ENCODE measurements at regions of chr4 and their contacts with region 1.

Region 1: GRCh38 chr4:25159884-25160713 is at the start of gene SEPSECS:
- DNase-seq: peak; percentile 94
- H3K4me3 Mint-ChIP-seq: peak within 1 kb of the TSS; percentile 92
- H3K27ac Mint-ChIP-seq: peak within 1 kb of the TSS; percentile 90
- H3K4me1 Mint-ChIP-seq: peaks cover 32% of the 10 kb centered on the region
- H3K27me3 Mint-ChIP-seq: no peaks in the 10 kb centered on the region
- total RNA-seq, gene SEPSECS: 13.4 TPM in 2 replicates

Region 2: GRCh38 chr4:25123236-25123635 is 36.9 kb before region 1 on chr4:
- intact Hi-C with region 1: loop called (anchors 1 kb)
- DNase-seq: no peak
- H3K4me3 Mint-ChIP-seq: no peak overlapping the region
- H3K27ac Mint-ChIP-seq: peak overlapping the region; percentile 58
- H3K4me1 Mint-ChIP-seq: peaks cover 27% of the 10 kb centered on the region
- H3K27me3 Mint-ChIP-seq: no peaks in the 10 kb centered on the region

Region 3: GRCh38 chr4:25180524-25181131 is 20.5 kb after region 1 on chr4:
- intact Hi-C with region 1: loop called (anchors 2 kb)
- DNase-seq: no peak
- H3K4me3 Mint-ChIP-seq: no peak overlapping the region
- H3K27ac Mint-ChIP-seq: no peak overlapping the region
- H3K4me1 Mint-ChIP-seq: peaks cover 12% of the 10 kb centered on the region
- H3K27me3 Mint-ChIP-seq: no peaks in the 10 kb centered on the region

Region 4: DNA sequence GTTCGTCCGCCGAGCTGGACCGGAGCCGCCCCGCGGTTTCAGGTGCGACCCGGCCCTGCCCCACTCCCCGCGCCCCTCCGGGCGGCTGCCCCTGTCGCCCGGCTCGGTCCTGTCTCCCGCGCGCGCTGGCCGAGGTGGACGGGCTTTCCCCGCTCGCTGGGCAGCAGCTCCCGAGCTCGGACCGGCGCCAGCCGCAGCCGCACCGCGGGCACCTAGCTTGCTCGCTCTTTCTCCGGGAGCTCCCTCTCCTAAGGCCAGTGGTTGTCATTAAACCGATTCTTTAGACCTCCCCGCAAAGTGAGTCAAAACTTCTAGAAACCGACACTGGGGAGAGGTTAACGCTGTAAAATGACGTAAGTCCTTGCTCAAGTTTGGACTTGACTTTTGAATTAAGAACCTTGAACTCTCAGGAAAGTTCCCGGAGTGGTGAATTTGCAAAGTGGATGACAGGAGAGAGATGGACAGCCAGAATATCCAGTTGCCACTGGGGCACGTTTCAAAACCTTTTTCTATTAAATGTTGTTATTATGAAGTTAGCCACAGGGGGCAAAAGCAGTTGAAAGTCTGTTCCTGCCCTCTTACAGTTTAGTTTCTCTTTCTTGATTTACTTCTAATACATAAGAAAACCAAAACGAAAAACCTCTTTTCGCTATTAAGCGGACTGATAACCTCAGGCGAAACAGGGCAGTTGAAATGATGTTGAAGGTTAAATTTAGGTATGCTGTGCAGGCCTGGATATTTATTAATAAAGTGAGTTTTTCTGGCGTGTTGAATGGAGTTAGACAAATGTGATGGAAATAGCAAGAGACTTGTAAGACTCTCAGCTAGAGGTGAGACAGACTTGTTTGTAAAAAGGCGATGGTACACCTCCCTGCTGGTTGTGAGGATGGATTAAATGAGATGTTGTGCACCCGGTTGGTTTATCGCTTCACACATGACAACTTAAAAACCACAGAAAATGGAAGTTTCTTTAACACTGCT is 74.6 kb after region 1 on chr4:
- intact Hi-C with region 1: loop called (anchors 1 kb)
- DNase-seq: peak; percentile 40
- H3K4me3 Mint-ChIP-seq: peak overlapping the region; percentile 95
- H3K27ac Mint-ChIP-seq: peak overlapping the region; percentile 98
- H3K4me1 Mint-ChIP-seq: peaks cover 35% of the 10 kb centered on the region
- H3K27me3 Mint-ChIP-seq: no peaks in the 10 kb centered on the region

Region 5: GRCh38 chr4:25312496-25313200 is 152.5 kb after region 1 on chr4 and contains the start of gene ZCCHC4:
- intact Hi-C with region 1: loop called (anchors 2 kb)
- DNase-seq: peak; percentile 87
- H3K4me3 Mint-ChIP-seq: peak within 1 kb of the TSS; percentile 99
- H3K27ac Mint-ChIP-seq: peak within 1 kb of the TSS; percentile 95
- H3K4me1 Mint-ChIP-seq: peaks cover 24% of the 10 kb centered on the region
- H3K27me3 Mint-ChIP-seq: no peaks in the 10 kb centered on the region
- total RNA-seq, gene ZCCHC4: 14.8 and 15.1 TPM in 2 replicates

Region 6: DNA sequence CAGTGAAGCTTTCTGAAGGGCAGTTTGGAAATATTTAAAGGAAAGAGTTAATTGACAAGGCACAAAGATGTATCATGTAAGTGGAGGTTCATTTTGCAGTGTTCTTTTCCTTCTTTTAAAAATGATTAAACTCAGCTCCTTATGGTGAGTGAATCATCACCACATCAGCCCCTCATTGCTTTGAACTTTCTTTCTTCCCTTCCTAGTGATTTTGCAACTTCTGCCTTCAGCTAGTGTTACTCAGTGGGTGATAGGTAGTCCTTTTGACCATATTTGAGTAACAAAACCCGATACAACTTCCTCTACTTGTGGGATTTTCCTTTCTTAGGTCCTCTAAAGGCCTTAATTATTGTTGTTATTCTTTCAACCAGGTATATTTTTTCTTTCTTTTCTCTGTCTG is 160.7 kb after region 1 on chr4:
- intact Hi-C with region 1: loop called (anchors 2 kb)
- DNase-seq: no peak
- H3K4me3 Mint-ChIP-seq: no peak overlapping the region
- H3K27ac Mint-ChIP-seq: peak overlapping the region; percentile 77
- H3K4me1 Mint-ChIP-seq: peaks cover 29% of the 10 kb centered on the region
- H3K27me3 Mint-ChIP-seq: no peaks in the 10 kb centered on the region

Region 7: GRCh38 chr4:25367004-25367621 is 207.0 kb after region 1 on chr4:
- intact Hi-C with region 1: loop called (anchors 5 kb)
- DNase-seq: no peak
- H3K4me3 Mint-ChIP-seq: no peak overlapping the region
- H3K27ac Mint-ChIP-seq: no peak overlapping the region
- H3K4me1 Mint-ChIP-seq: no peaks in the 10 kb centered on the region
- H3K27me3 Mint-ChIP-seq: no peaks in the 10 kb centered on the region